RWPE1 (cell line): ENCODE measurements at regions of chr9 and their contacts with region 1.

Region 1: GRCh38 chr9:109574068-109574882 is 76.2 kb upstream of the PTPN3 start:
- DNase-seq: peak; percentile 81
- H3K27ac ChIP-seq: no peak overlapping the region
- CTCF ChIP-seq: peak; percentile 95

Region 2: DNA sequence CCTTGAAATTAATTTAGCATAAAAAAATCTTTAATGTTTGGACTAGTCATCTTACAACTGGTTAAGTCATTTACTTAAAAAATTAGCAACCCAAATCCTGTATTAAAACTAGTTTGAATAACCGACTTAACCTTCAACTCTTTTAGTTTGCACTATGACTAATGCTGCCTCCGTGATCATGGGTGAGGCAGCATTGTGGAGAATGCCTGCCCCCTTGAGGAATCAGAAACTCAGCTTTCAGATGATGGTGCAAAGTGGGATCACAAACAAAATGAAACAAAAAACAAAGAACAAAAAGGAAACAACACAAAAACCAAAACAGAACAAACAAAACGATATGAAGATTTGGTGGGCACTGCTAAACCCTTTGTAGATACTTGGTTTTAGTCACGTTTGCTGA is 78.7 kb after region 1 on chr9:
- CTCF ChIA-PET with region 1: interaction called, 14 read pairs
- POLR2A ChIA-PET with region 1: no interaction called
- DNase-seq: peak; percentile 83
- H3K27ac ChIP-seq: no peak overlapping the region
- CTCF ChIP-seq: peak; percentile 64

Region 3: DNA sequence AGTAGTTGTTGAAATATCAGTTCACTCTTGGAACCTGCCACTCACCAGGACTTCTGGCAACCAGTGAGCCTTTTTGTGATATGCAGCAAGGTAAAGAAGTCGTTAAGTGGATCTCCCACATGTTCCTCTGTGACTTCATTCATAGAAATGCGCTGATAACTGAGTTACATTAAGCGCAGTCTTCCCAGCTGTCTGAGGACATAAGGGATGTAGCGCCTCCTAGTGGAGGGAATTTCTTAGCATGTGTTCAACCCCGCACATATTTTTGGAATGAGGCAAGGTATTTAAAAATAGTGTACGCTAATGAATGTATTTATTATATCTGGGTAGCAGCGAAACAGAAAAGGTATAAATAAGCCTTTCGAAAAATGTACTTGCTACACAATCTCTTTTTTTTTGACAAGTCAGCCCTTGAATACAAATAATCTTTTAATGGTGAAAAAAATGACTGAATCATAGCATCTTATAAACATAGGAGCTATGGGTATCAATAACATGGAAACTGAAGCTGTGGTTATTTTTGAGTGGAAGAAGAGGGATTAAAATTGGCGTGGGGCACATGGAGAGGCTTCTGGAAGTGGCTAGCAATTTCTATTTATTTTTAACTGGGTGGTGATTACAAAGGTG is 243.7 kb after region 1 on chr9:
- CTCF ChIA-PET with region 1: interaction called, 18 read pairs
- POLR2A ChIA-PET with region 1: no interaction called
- DNase-seq: peak; percentile 90
- H3K27ac ChIP-seq: no peak overlapping the region
- CTCF ChIP-seq: peak; percentile 89

Region 4: GRCh38 chr9:110058304-110058953 is 484.2 kb after region 1 on chr9:
- CTCF ChIA-PET with region 1: interaction called, 11 read pairs
- POLR2A ChIA-PET with region 1: no interaction called
- DNase-seq: peak; percentile 82
- H3K27ac ChIP-seq: no peak overlapping the region
- CTCF ChIP-seq: no peak; the same call in 1 of the 2 replicates